ENCODE measurements at regions of chr5 and their contacts with region 1.

Region 1: DNA sequence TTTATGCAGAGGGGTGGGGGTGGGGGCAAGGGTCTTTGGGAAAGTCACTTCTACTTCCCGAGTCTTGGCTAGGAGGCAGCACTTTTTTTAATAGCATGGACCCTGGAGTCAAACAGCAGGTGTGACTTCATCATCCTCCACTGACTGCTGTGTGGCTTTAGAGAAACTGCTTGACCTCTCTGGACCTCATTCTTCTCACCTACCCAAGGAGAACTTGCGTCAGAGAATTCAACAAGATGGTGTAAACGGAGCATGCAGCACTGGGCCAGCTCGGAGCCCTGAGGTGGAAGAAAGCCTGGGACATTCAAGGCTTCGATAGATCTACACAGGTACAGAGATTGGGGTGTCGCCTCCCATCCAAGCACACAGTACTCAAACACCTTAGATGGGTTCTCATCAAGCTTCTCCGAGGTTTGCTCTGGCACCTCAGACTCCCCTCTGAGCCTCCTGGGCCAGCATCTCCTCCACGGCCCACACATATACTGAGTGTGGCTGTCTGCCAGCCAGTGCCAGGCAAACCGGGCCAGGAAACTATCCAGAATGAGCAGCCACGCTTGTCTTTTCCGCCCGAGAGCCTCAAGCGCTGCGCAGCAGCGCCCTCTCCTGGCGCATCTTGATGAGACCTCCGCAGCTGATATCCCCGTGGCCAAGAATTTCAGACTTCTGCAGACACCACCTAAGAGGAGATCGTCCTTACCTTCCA is 4.6 kb upstream of the SLC25A48 start:
- DNase-seq: peak; percentile 67
- H3K4me3 ChIP-seq: no peak overlapping the region
- H3K27ac ChIP-seq: no peak overlapping the region
- H3K4me1 ChIP-seq: no peaks in the 10 kb centered on the region
- CTCF ChIP-seq: peak; percentile 89

Region 2: GRCh38 chr5:134275822-134276221 is 1554.0 kb before region 1 on chr5:
- CTCF ChIA-PET with region 1: no interaction called
- POLR2A ChIA-PET with region 1: no interaction called
- intact Hi-C with region 1: loop called (anchors 10 kb)
- DNase-seq: no peak
- H3K4me3 ChIP-seq: no peak overlapping the region
- H3K27ac ChIP-seq: no peak overlapping the region
- H3K4me1 ChIP-seq: no peaks in the 10 kb centered on the region
- CTCF ChIP-seq: no peak

Region 3: GRCh38 chr5:135466178-135467050 is 363.4 kb before region 1 on chr5:
- CTCF ChIA-PET with region 1: no interaction called
- POLR2A ChIA-PET with region 1: no interaction called
- intact Hi-C with region 1: loop called (anchors 10 kb)
- DNase-seq: no peak
- H3K4me3 ChIP-seq: no peak overlapping the region
- H3K27ac ChIP-seq: no peak overlapping the region
- H3K4me1 ChIP-seq: no peaks in the 10 kb centered on the region
- CTCF ChIP-seq: peak; percentile 70

Region 4: GRCh38 chr5:135560858-135561257 is 269.0 kb before region 1 on chr5:
- CTCF ChIA-PET with region 1: no interaction called
- POLR2A ChIA-PET with region 1: no interaction called
- intact Hi-C with region 1: loop called (anchors 1 kb)
- DNase-seq: peak; percentile 79
- H3K4me3 ChIP-seq: no peak overlapping the region
- H3K27ac ChIP-seq: no peak overlapping the region
- H3K4me1 ChIP-seq: no peaks in the 10 kb centered on the region
- CTCF ChIP-seq: peak; percentile 85

Region 5: DNA sequence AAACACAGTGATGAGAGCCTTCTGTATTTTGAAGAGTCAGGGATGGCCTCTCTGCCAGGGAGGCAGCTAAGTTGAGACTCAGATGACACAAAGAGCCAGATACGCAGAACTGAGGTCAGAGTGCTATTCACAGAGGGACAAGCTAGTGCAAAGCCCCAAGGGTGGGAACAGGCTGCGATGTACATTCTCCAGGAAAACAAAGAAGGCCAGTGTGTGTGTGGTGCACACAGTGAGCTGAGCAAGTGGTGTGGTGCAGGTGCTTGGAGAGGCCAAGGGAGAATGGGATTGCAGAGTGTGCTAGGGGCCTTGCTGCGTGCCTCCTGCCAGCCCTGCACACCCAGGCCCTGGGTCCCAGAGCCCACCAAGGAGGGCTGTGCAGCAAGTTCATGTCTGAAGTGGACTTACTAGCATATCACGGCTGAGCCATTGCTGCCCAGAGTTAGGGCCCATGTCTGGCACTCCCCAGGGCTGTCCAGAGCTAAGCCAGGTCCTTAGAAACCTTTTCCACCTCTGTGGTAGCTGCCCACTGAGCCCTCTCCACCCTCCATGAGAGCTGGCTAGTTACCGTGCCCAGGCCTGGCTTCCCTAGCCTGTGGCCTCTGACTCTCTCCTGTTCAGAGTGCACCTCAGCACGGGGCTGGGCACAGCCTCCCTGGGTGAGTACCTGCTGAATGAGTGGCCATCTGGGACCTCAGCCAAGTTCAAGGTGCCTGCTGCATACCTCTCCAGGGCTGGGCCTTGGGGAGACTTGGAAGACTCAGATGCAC is 13.9 kb after region 1 on chr5:
- CTCF ChIA-PET with region 1: no interaction called
- POLR2A ChIA-PET with region 1: no interaction called
- intact Hi-C with region 1: no loop called
- DNase-seq: no peak
- H3K4me3 ChIP-seq: no peak overlapping the region
- H3K27ac ChIP-seq: no peak overlapping the region
- H3K4me1 ChIP-seq: no peaks in the 10 kb centered on the region
- CTCF ChIP-seq: no peak

Region 6: DNA sequence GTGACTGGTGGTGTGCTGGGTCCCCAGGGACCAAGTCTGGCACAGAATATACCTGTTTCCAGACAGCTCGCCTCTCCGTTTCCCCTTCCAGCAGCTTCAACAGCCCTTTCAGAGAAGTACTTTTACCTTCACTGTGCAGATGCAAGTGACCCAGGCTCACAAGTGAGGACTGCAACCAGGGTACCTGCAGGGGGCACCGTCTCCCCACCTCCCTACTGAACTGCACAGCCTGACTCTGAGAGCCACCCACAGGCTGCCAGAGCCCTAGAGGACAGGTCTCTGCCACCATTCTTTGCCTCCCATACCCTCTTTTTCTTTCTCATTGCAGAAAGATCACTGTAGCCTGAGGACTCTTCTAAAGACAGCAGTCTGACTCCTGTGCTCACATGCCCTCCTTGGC is 50.4 kb after region 1 on chr5:
- CTCF ChIA-PET with region 1: no interaction called
- POLR2A ChIA-PET with region 1: no interaction called
- intact Hi-C with region 1: no loop called
- DNase-seq: peak; percentile 40
- H3K4me3 ChIP-seq: no peak overlapping the region
- H3K27ac ChIP-seq: no peak overlapping the region
- H3K4me1 ChIP-seq: no peaks in the 10 kb centered on the region
- CTCF ChIP-seq: peak; percentile 72

Measured in OCI-LY7 (cell line).